ENCODE measurements at regions of chr3 and their contacts with region 1.

Region 1: GRCh38 chr3:9396700-9397521 is 504 bp upstream of the SETD5 start:
- DNase-seq: peak; percentile 83

Region 2: DNA sequence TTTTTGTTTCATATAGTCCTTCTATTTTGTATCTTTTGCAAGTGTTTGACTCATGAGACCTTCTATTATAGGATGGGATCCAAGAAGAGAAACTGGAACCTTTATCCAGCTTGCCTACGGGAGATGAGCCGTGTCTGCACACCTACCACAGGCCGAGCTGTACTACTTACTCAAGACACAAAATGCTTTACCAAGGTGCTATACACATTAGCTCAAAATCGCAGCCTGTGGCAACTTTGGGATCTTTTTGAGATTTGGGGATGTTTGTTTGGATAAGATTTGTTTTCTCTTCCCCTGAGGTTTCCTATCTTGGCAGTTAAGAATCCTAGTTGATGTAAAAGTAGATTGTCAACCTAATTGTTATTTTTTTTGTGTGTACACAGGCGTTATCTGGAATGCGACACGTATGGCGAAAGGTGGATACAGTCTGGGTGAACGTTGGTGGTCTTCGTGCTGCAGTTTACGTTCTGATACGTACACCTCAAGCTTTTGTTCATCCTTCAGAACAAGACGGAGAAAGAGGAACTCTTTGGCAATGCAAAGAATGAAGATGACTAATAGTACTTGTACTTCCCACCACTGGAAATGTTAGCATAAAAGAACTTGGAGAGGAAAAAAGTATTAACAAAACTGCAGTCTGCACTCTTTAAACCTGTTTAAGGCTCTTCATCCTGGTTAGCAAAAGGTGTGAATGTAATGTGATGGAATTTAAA is 12.6 kb before region 1 on chr3:
- CTCF ChIA-PET with region 1: no interaction called
- POLR2A ChIA-PET with region 1: interaction called, 20 read pairs
- DNase-seq: no peak

Region 3: GRCh38 chr3:9409981-9410854 is 13.3 kb after region 1 on chr3:
- CTCF ChIA-PET with region 1: no interaction called
- POLR2A ChIA-PET with region 1: interaction called, 15 read pairs
- DNase-seq: no peak

Region 4: DNA sequence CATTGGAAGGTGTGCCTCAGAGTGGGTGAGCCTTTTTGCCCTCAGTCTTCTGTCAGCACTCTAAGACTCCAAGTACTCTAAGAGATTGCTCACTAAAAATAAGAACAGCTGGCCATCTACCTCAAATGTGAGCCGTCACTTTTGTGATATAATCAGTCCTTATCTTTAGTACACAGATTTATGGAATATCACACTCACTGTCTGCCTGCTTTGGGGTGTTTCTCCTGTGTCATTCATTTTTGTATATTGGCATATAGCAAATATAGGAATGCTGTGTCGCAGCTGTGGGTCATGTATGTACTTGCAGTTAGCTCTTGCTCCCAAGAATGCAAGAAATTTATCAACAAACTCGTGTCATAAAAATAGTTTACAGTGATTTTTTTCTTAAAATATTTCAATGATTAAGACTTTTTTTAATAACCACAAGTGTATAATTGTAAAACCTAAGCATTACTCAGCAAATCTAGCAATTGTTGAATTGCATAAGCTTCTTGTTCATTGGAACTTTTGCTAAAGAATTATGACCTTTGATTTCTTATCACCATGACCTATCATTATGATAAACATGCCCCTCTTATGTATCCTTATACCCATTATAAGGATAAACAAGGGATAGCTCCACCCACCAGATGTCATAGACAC is 19.3 kb after region 1 on chr3:
- CTCF ChIA-PET with region 1: no interaction called
- POLR2A ChIA-PET with region 1: interaction called, 46 read pairs
- DNase-seq: no peak

Region 5: DNA sequence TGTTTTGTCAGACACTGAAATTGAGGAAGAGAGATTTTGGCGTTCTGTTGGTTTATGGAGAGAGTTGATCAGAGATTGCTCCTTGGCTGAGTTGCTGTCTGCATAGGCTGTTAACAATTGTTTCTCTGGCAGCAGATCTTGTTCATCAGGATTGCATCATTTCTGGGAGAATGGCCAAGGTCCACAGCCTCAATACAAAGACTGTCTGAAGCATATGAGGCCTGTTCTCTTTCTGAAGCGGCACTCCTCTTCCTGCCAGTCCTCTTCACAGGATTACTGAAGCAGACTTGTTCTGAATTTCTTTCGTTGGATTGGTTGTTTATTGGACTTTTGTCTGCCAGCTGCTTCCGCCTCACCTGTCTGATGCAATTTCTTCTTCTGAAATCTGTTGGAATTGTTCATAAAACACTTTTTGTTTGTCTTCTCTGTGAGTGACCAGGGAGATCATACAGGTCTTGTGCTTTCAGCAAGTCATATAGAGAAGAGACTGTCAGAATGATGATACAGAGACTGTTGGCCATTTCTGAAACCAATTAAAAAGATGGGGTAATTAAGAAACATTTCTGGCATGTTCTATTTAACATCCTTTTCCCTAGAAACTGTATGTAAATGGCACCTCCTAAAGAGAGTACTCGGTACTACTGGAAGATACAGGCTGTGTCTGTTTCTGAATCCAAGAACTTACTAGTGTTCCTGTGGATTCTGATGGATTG is 26.0 kb after region 1 on chr3:
- CTCF ChIA-PET with region 1: interaction called, 4 read pairs
- POLR2A ChIA-PET with region 1: interaction called, 46 read pairs
- DNase-seq: peak; percentile 49